Caco-2 (cell line): ENCODE measurements at regions of chr3 and their contacts with region 1.

Region 1: GRCh38 chr3:37996785-37997301 is 6.3 kb downstream of the VILL start:
- DNase-seq: peak; percentile 87
- H3K4me3 ChIP-seq: no peak overlapping the region
- H3K4me3 Mint-ChIP-seq: peak overlapping the region; percentile 25
- H3K27ac Mint-ChIP-seq: peak overlapping the region; percentile 48
- H3K4me1 ChIP-seq: peaks cover 67% of the 10 kb centered on the region
- H3K4me1 Mint-ChIP-seq: peaks cover 54% of the 10 kb centered on the region
- H3K27me3 ChIP-seq: no peaks in the 10 kb centered on the region
- H3K27me3 Mint-ChIP-seq: no peaks in the 10 kb centered on the region
- CTCF ChIP-seq: peak; percentile 81 to 83

Region 2: GRCh38 chr3:37907906-37908305 is 88.9 kb before region 1 on chr3:
- CTCF ChIA-PET with region 1: no interaction called
- POLR2A ChIA-PET with region 1: no interaction called
- intact Hi-C with region 1: no loop called
- DNase-seq: no peak
- H3K4me3 ChIP-seq: no peak overlapping the region
- H3K4me3 Mint-ChIP-seq: no peak overlapping the region
- H3K27ac Mint-ChIP-seq: no peak overlapping the region
- H3K4me1 ChIP-seq: peaks cover 24% of the 10 kb centered on the region
- H3K4me1 Mint-ChIP-seq: peaks cover 10% of the 10 kb centered on the region
- H3K27me3 ChIP-seq: no peaks in the 10 kb centered on the region
- H3K27me3 Mint-ChIP-seq: no peaks in the 10 kb centered on the region
- CTCF ChIP-seq: no peak

Region 3: DNA sequence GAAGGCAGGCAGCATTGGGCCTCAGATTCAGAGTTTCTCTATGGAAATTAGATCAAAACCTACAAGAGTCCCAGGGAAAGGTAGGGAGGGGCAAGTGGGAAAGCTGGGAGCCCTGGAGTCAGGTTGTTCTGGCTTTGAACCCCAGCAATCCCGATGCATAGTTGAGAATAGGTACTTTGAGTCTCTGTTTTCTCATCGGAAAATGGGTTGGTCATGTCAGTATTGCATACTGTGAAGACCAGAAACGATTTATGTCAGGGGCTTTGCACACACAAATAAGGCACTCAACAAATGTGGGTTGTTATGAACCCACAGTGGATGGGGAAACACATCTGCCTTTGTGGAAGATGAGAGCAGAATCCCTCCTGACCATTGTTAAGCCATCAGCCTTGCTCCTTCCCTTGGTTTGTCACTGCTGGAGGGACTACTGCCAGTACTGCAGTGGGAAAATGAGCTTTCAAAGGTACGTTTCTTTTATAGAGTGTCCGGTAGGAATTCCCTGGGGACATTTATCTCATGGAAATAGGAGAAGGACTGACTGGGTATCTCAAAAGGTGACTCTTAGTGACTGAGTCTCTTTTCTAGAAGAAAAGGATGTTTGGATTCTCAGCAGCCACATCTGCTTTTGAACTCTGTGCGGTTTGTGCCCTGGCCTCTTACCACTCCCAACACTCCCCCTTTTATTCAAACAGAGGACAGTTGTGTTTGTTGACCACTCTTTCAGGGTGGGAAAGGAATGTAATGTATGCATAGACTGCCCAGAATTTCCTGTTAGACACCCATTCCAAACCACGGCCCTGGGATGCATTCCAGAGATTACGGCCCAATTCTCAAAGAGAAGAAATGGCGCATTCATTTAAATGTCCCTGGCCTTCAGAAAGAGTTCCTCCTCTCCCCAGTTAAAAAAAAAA is 60.8 kb before region 1 on chr3:
- CTCF ChIA-PET with region 1: interaction called, 3 read pairs
- POLR2A ChIA-PET with region 1: no interaction called
- intact Hi-C with region 1: loop called (anchors 1 kb)
- DNase-seq: peak; percentile 77 to 84
- H3K4me3 ChIP-seq: no peak overlapping the region
- H3K4me3 Mint-ChIP-seq: peak overlapping the region; percentile 28
- H3K27ac Mint-ChIP-seq: peak overlapping the region; percentile 91
- H3K4me1 ChIP-seq: peaks cover 45% of the 10 kb centered on the region
- H3K4me1 Mint-ChIP-seq: peaks cover 41% of the 10 kb centered on the region
- H3K27me3 ChIP-seq: no peaks in the 10 kb centered on the region
- H3K27me3 Mint-ChIP-seq: no peaks in the 10 kb centered on the region
- CTCF ChIP-seq: no peak

Region 4: GRCh38 chr3:37979541-37980461 is 17.0 kb before region 1 on chr3:
- CTCF ChIA-PET with region 1: interaction called, 34 read pairs
- POLR2A ChIA-PET with region 1: interaction called, 3 read pairs
- intact Hi-C with region 1: no loop called
- DNase-seq: no peak
- H3K4me3 ChIP-seq: no peak overlapping the region
- H3K4me3 Mint-ChIP-seq: no peak overlapping the region
- H3K27ac Mint-ChIP-seq: peak overlapping the region; percentile 45
- H3K4me1 ChIP-seq: peaks cover 37% of the 10 kb centered on the region
- H3K4me1 Mint-ChIP-seq: peaks cover 20% of the 10 kb centered on the region
- H3K27me3 ChIP-seq: no peaks in the 10 kb centered on the region
- H3K27me3 Mint-ChIP-seq: no peaks in the 10 kb centered on the region
- CTCF ChIP-seq: no peak

Region 5: DNA sequence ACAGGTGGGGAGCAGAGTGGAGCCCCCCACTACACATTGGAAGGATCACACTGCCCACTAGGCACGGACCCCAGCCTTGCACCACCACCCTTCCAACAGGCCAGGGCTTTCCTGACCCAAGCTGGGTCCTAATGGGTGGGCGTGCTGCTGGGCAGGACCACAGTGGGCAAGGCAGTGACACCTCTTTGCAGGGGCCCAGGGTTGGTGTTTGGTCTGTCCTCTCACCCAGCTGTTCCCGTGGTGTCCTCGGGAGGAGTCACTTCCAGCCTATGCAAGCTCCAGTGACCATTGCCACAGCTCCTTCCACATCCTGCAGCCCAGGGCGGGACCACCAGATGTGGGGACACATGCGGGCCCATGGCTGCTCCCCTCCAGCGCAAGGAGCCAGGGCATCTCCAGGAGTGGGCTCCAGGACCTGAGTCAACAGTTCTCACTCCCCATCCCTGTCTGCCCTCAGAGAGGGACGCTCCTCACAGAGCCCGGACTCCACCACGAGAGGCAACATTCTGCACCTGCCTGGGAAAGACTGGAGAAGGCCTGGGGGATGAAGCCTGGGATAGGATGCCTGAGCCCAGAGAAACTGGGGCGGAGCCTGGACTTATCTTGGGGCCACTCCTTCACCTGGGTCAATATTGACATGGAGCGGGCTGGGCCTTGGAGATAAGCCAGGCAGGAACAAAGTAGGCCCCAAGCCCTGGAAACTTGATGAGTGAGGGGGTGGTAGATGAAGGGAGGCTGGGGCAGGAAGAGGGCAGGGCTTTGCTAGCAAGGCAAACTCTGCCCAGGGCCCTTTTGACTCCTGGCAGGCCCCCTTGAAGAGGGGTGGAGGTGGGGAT is 10.1 kb before region 1 on chr3:
- CTCF ChIA-PET with region 1: interaction called, 12 read pairs
- POLR2A ChIA-PET with region 1: interaction called, 4 read pairs
- intact Hi-C with region 1: no loop called
- DNase-seq: peak; percentile 96 to 98
- H3K4me3 ChIP-seq: peak overlapping the region; percentile 13
- H3K4me3 Mint-ChIP-seq: peak overlapping the region; percentile 59
- H3K27ac Mint-ChIP-seq: peak overlapping the region; percentile 83
- H3K4me1 ChIP-seq: peaks cover 78% of the 10 kb centered on the region
- H3K4me1 Mint-ChIP-seq: peaks cover 58% of the 10 kb centered on the region
- H3K27me3 ChIP-seq: no peaks in the 10 kb centered on the region
- H3K27me3 Mint-ChIP-seq: no peaks in the 10 kb centered on the region
- CTCF ChIP-seq: peak in 1 of 2 experiments; percentile 24

Region 6: GRCh38 chr3:38070013-38070412 is 73.2 kb after region 1 on chr3:
- CTCF ChIA-PET with region 1: no interaction called
- POLR2A ChIA-PET with region 1: no interaction called
- intact Hi-C with region 1: no loop called
- DNase-seq: no peak
- H3K4me3 ChIP-seq: no peak overlapping the region
- H3K4me3 Mint-ChIP-seq: no peak overlapping the region
- H3K27ac Mint-ChIP-seq: no peak overlapping the region
- H3K4me1 ChIP-seq: no peaks in the 10 kb centered on the region
- H3K4me1 Mint-ChIP-seq: no peaks in the 10 kb centered on the region
- H3K27me3 ChIP-seq: no peaks in the 10 kb centered on the region
- H3K27me3 Mint-ChIP-seq: peaks cover 3% of the 10 kb centered on the region
- CTCF ChIP-seq: no peak

Region 7: GRCh38 chr3:38738630-38739395 is 742.0 kb after region 1 on chr3:
- CTCF ChIA-PET with region 1: no interaction called
- POLR2A ChIA-PET with region 1: no interaction called
- intact Hi-C with region 1: no loop called
- DNase-seq: peak; percentile 39 to 44
- H3K4me3 ChIP-seq: no peak overlapping the region
- H3K4me3 Mint-ChIP-seq: no peak overlapping the region
- H3K27ac Mint-ChIP-seq: no peak overlapping the region
- H3K4me1 ChIP-seq: no peaks in the 10 kb centered on the region
- H3K4me1 Mint-ChIP-seq: no peaks in the 10 kb centered on the region
- H3K27me3 ChIP-seq: no peaks in the 10 kb centered on the region
- H3K27me3 Mint-ChIP-seq: peaks cover 23% of the 10 kb centered on the region
- CTCF ChIP-seq: peak; percentile 12 to 36